ENCODE measurements at regions of chr14 and their contacts with region 1.

Region 1: DNA sequence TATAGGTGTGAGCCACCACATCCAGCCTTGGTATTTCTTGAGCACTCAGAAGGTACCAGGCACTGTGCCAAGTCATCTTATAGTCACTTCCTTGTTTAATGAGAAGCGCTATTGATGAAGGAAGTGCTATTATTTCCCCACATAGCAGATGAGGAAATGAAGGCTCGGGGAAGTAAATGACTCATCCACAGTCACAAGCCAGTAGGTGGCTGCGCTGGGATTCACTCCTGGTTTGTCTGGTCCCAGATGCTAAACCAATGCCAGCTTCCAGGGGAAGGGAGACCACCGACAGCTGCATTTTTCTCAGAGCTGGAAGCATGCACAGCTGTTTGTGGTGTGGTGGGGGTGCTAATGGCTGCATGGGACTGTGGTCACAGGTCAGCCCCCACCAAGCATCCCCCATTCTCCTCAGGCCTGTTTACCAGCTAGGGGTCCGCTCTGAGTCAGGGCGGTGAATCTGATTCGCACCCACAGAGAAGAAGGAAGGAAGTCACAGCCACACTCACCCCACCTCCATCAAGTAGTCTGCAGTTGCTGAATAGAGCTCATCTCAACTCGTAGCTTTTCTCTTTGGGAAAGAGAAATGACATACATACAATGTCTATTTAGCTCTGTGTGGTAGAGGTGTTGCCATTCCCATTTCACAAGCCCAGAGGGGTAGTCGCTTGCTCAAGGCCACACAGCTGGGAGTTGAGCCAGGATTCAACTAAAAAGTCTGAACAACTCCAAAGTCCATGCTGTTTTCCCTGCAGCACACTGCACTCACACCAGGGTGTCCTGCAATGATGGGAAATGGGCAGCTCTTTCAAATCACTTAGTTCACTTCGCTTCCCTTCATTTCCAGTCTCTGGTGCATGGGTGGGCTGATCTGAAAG is 6.3 kb upstream of the LTBP2 start:
- DNase-seq: no peak
- H3K4me3 ChIP-seq: no peak overlapping the region
- CTCF ChIP-seq: no peak

Region 2: GRCh38 chr14:74109369-74109768 is 508.9 kb before region 1 on chr14:
- CTCF ChIA-PET with region 1: no interaction called
- POLR2A ChIA-PET with region 1: no interaction called
- DNase-seq: no peak
- H3K4me3 ChIP-seq: no peak overlapping the region
- CTCF ChIP-seq: no peak

Region 3: GRCh38 chr14:74571901-74572725 is 46.2 kb before region 1 on chr14:
- CTCF ChIA-PET with region 1: interaction called, 4 read pairs
- POLR2A ChIA-PET with region 1: interaction called, 18 read pairs
- DNase-seq: peak; percentile 99
- H3K4me3 ChIP-seq: peak overlapping the region; percentile 36
- CTCF ChIP-seq: no peak

Region 4: GRCh38 chr14:74630881-74631690 is 12.8 kb after region 1 on chr14:
- CTCF ChIA-PET with region 1: interaction called, 106 read pairs
- POLR2A ChIA-PET with region 1: interaction called, 29 read pairs
- DNase-seq: no peak
- H3K4me3 ChIP-seq: no peak overlapping the region
- CTCF ChIP-seq: no peak

Region 5: DNA sequence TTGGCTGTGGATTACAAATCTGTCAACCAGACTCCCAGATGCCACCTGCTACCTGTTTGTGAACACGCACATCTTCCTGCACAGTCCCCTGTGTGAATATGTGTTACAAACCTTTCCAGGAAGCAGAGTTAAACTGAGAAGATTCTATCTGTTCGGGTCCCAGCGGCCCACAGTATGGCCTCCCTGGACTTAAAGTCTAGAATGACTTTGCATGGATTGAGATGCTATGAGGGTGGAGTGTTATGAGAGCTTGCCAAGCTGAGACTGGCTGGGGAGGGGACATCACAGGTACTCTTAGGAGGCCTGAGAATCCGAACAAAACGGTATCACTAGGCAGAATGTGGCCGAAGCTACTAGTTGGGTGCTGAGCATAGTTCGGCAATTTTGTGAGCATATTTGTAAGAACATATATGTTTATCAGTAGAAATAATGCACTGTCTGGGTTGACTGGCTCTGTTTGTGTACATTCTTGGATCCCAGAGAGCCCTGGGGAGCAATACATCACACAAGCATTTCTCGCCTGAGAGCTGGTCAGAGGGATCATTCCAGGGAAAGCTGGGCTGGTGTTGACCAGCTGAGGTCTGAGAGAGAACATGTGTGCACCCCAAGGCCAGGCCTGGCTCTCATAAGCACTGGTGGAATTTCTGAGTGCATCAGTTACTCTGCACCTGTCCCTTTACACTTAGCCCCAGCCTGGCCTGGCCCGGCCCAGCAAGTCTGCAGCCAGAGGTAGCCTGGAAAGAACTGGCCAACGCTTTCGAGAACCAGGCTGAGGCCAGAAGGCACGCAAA is 23.5 kb after region 1 on chr14:
- CTCF ChIA-PET with region 1: interaction called, 106 read pairs
- POLR2A ChIA-PET with region 1: interaction called, 29 read pairs
- DNase-seq: no peak
- H3K4me3 ChIP-seq: no peak overlapping the region
- CTCF ChIP-seq: no peak

Region 6: GRCh38 chr14:74647678-74648461 is 29.6 kb after region 1 on chr14:
- CTCF ChIA-PET with region 1: interaction called, 106 read pairs
- POLR2A ChIA-PET with region 1: interaction called, 13 read pairs
- DNase-seq: no peak
- H3K4me3 ChIP-seq: no peak overlapping the region
- CTCF ChIP-seq: no peak

Region 7: GRCh38 chr14:74655599-74656389 is 37.5 kb after region 1 on chr14:
- CTCF ChIA-PET with region 1: interaction called, 66 read pairs
- POLR2A ChIA-PET with region 1: interaction called, 5 read pairs
- DNase-seq: peak; percentile 59
- H3K4me3 ChIP-seq: no peak overlapping the region
- CTCF ChIP-seq: no peak

Region 8: DNA sequence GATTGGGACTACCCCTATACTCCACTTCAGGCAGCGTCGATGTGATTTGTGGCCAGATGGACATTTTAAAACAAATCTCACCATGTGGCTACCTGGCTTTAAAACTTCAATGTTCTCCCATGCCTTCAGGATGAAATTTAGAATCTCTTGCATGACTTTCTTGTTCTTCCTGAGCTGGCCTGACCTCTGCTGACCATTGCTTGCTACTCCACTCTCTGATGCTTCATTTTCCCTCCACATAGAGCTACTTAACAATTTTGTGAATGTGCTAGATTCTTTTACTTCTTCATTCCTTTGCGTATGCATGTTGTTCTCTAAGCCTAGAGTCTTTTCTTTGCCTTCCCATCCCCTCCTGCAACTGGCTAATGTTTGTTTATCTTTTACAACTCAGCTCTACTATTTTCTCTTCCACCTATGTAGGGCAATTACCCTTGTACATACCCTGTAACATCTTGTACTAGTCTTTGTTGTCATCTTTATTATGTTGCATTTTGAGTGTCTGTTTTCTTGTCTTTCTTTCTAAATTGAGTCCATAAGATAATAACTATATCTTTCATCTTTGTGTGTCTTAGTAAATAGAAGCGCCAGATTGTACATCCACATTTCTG is 186.0 kb after region 1 on chr14:
- CTCF ChIA-PET with region 1: interaction called, 318 read pairs
- POLR2A ChIA-PET with region 1: no interaction called
- DNase-seq: peak; percentile 9
- H3K4me3 ChIP-seq: no peak overlapping the region
- CTCF ChIP-seq: peak; percentile 60

Measured in AG04449 (cell line).